HepG2 (cell line): ENCODE measurements at regions of chr17 and their contacts with region 1.

Region 1: GRCh38 chr17:57243171-57243948 is 13.0 kb upstream of the MSI2 start:
- DNase-seq: peak; percentile 70
- ATAC-seq: peak; percentile 94
- H3K4me3 ChIP-seq: no peak overlapping the region
- H3K27ac ChIP-seq: no peak overlapping the region
- H3K4me1 ChIP-seq: peaks cover 10% of the 10 kb centered on the region
- H3K27me3 ChIP-seq: no peaks in the 10 kb centered on the region
- CTCF ChIP-seq: peak; percentile 99
- EP300 ChIP-seq: no peak
- POLR2A ChIP-seq: no peak
- RAD21 ChIP-seq: peak; percentile 98

Region 2: DNA sequence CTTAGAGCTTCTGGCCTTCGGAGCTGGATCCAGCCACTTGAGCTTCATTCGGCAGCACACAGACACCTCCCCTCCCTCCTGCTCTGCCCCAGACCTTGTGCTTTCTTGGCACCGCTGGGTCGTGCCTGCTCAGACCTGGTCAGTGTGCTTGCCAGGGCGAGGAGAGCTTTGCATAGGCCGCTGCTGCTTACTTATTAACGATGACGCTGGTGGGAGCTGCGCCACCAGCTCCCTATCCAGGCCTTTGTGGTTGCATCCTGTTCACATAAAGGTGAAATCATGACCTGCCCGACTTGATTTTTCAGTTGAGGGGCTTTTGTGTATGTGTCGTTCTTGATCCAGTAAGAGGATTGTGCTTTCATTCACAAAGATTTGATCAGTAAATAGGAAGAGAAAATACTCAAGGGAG is 114.0 kb after region 1 on chr17:
- CTCF ChIA-PET with region 1: no interaction called
- POLR2A ChIA-PET with region 1: no interaction called
- in situ Hi-C with region 1: no loop called
- intact Hi-C with region 1: no loop called
- DNase-seq: no peak
- ATAC-seq: no peak; the same call in 2 of the 3 replicates
- H3K4me3 ChIP-seq: no peak overlapping the region
- H3K27ac ChIP-seq: no peak overlapping the region
- H3K4me1 ChIP-seq: peaks cover 52% of the 10 kb centered on the region
- H3K27me3 ChIP-seq: no peaks in the 10 kb centered on the region
- CTCF ChIP-seq: no peak
- EP300 ChIP-seq: no peak
- POLR2A ChIP-seq: no peak
- RAD21 ChIP-seq: no peak

Region 3: GRCh38 chr17:57401556-57402488 is 158.5 kb after region 1 on chr17:
- CTCF ChIA-PET with region 1: interaction called, 20 read pairs
- POLR2A ChIA-PET with region 1: no interaction called
- in situ Hi-C with region 1: no loop called
- intact Hi-C with region 1: loop called (anchors 5 kb)
- DNase-seq: peak; percentile 27
- ATAC-seq: 0 out of 3 replicates have a peak, but pooled peaks have one; percentile 10
- H3K4me3 ChIP-seq: no peak overlapping the region
- H3K27ac ChIP-seq: no peak overlapping the region
- H3K4me1 ChIP-seq: peaks cover 40% of the 10 kb centered on the region
- H3K27me3 ChIP-seq: no peaks in the 10 kb centered on the region
- CTCF ChIP-seq: peak; percentile 44
- EP300 ChIP-seq: no peak
- POLR2A ChIP-seq: no peak
- RAD21 ChIP-seq: 0 out of 2 replicates have a peak, but pooled peaks have one; percentile 37

Region 4: GRCh38 chr17:57440522-57441485 is 197.4 kb after region 1 on chr17:
- CTCF ChIA-PET with region 1: interaction called, 39 read pairs
- POLR2A ChIA-PET with region 1: no interaction called
- in situ Hi-C with region 1: no loop called
- intact Hi-C with region 1: loop called (anchors 2 kb)
- DNase-seq: peak; percentile 91
- ATAC-seq: peak; percentile 84
- H3K4me3 ChIP-seq: peak overlapping the region in 2 of 3 experiments; percentile 17 to 54; a peak in 3 of 6 replicates
- H3K27ac ChIP-seq: peak overlapping the region; percentile 64
- H3K4me1 ChIP-seq: peaks cover 84% of the 10 kb centered on the region
- H3K27me3 ChIP-seq: no peaks in the 10 kb centered on the region
- CTCF ChIP-seq: peak; percentile 88
- EP300 ChIP-seq: no peak
- POLR2A ChIP-seq: no peak
- RAD21 ChIP-seq: peak; percentile 89

Region 5: GRCh38 chr17:57604771-57605674 is 361.7 kb after region 1 on chr17:
- CTCF ChIA-PET with region 1: interaction called, 4 read pairs
- POLR2A ChIA-PET with region 1: no interaction called
- in situ Hi-C with region 1: no loop called
- intact Hi-C with region 1: loop called (anchors 10 kb)
- DNase-seq: no peak
- ATAC-seq: no peak
- H3K4me3 ChIP-seq: no peak overlapping the region
- H3K27ac ChIP-seq: no peak overlapping the region
- H3K4me1 ChIP-seq: peaks cover 41% of the 10 kb centered on the region
- H3K27me3 ChIP-seq: no peaks in the 10 kb centered on the region
- CTCF ChIP-seq: no peak
- EP300 ChIP-seq: no peak
- POLR2A ChIP-seq: no peak
- RAD21 ChIP-seq: no peak

Region 6: DNA sequence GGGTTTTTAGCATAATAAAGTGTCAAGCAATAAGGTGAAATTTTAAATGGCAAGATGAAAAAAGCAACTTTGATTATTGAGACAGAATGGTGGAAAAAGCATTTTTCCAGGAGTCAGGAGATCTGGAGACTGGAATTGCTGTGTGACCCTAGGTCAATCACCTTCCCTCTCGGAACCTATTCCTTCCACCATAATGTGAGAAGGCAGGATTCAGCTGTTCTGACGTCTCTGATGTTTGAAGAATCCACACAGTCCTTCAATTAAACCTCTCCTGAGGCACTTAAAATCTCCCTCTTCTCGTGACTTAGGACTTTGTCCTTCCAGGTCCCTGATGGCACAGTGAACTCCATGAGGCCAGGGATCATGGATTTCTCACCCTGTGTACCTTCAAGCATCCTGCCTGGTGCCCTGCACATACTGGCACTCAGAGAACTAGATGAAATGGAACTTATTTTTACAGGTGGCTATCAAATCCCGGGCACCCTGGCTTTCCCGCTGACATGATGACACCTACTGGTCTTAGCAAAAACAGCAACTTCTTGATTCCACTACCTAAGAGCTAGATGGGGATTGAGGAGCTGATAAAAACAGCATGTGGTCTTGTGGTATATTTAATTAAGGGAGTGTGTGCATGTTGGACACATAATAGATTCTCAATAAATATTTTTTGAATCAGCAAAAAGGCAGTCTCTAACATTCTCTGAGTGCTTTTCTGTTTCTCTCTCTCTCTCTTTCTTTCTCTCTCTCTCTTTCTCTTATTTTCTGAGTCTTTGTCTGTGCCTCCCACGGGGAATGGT is 504.1 kb after region 1 on chr17:
- CTCF ChIA-PET with region 1: interaction called, 25 read pairs
- POLR2A ChIA-PET with region 1: no interaction called
- in situ Hi-C with region 1: loop called (anchors 10 kb)
- intact Hi-C with region 1: loop called (anchors 5 kb)
- DNase-seq: peak; percentile 54
- ATAC-seq: peak; percentile 58
- H3K4me3 ChIP-seq: no peak overlapping the region
- H3K27ac ChIP-seq: no peak overlapping the region
- H3K4me1 ChIP-seq: peaks cover 26% of the 10 kb centered on the region
- H3K27me3 ChIP-seq: peaks cover 0 to 43% of the 10 kb centered on the region in 2 experiments; a peak in 3 of 5 replicates
- CTCF ChIP-seq: peak; percentile 89
- EP300 ChIP-seq: no peak
- POLR2A ChIP-seq: no peak
- RAD21 ChIP-seq: peak; percentile 49; the same call in 1 of the 2 replicates